ENCODE measurements at regions of chr4 and their contacts with region 1.

Region 1: GRCh38 chr4:38179690-38180377 is 219.6 kb downstream of the PTTG2 start:
- DNase-seq: peak in 1 of 2 experiments; percentile 55
- ATAC-seq: peak; percentile 74 to 89; a peak in 5 of 6 replicates
- H3K4me3 ChIP-seq: no peak overlapping the region
- H3K27ac ChIP-seq: peak overlapping the region in 1 of 2 experiments; percentile 76; a peak in 3 of 6 replicates
- H3K4me1 ChIP-seq: peaks cover 11% of the 10 kb centered on the region; the same call in 2 of the 3 replicates
- CTCF ChIP-seq: peak; percentile 92
- EP300 ChIP-seq: no peak
- POLR2A ChIP-seq: no peak
- RAD21 ChIP-seq: peak; percentile 96 to 97

Region 2: DNA sequence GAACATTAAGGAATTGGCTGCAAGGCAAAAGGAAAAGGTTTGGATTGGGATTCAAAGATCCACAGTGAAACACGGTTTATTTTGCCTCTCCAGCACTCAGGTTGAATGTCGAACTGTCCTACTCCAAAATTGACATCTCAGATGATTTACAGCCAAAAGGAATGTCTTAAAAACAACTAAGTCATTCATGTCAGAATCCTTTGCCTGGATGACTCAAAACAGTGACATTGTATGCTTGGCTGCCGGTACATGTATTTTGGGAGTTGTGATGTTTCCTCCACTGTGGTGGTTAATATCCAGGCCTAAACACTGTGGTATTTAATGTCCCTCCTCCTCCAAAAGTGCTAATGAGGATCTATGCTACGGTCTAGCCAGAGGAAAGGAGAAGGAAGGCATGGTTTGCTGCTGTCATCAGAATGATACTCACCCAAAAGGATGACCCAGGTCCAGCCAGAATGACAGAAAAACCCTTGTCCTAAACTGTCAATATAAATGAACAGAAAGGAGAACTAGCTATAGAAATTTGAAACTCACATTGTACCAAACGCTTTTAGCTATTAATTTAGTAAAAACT is 332.4 kb before region 1 on chr4:
- CTCF ChIA-PET with region 1: no interaction called
- POLR2A ChIA-PET with region 1: no interaction called
- DNase-seq: no peak
- ATAC-seq: no peak
- H3K4me3 ChIP-seq: no peak overlapping the region
- H3K27ac ChIP-seq: no peak overlapping the region
- H3K4me1 ChIP-seq: no peaks in the 10 kb centered on the region
- CTCF ChIP-seq: no peak
- EP300 ChIP-seq: no peak
- POLR2A ChIP-seq: no peak
- RAD21 ChIP-seq: no peak

Region 3: GRCh38 chr4:38069271-38069760 is 110.5 kb before region 1 on chr4:
- CTCF ChIA-PET with region 1: interaction called, 15 read pairs
- POLR2A ChIA-PET with region 1: no interaction called
- DNase-seq: peak; percentile 29 to 71
- ATAC-seq: peak; percentile 70 to 80; a peak in 5 of 6 replicates
- H3K4me3 ChIP-seq: no peak overlapping the region
- H3K27ac ChIP-seq: peak overlapping the region; percentile 33 to 52; a peak in 4 of 6 replicates
- H3K4me1 ChIP-seq: peaks cover 4% of the 10 kb centered on the region; the same call in 1 of the 3 replicates
- CTCF ChIP-seq: peak; percentile 56
- EP300 ChIP-seq: no peak
- POLR2A ChIP-seq: no peak
- RAD21 ChIP-seq: peak; percentile 71 to 72

Region 4: GRCh38 chr4:38169524-38169923 is 10.3 kb before region 1 on chr4:
- CTCF ChIA-PET with region 1: interaction called, 13 read pairs
- POLR2A ChIA-PET with region 1: no interaction called
- DNase-seq: no peak
- ATAC-seq: no peak
- H3K4me3 ChIP-seq: no peak overlapping the region
- H3K27ac ChIP-seq: peak overlapping the region; percentile 30 to 43; a peak in 4 of 6 replicates
- H3K4me1 ChIP-seq: peaks cover 5% of the 10 kb centered on the region; the same call in 1 of the 3 replicates
- CTCF ChIP-seq: no peak
- EP300 ChIP-seq: no peak
- POLR2A ChIP-seq: no peak
- RAD21 ChIP-seq: peak; percentile 17 to 18; a peak in 1 of 5 replicates

Region 5: GRCh38 chr4:38411092-38411491 is 231.3 kb after region 1 on chr4:
- CTCF ChIA-PET with region 1: no interaction called
- POLR2A ChIA-PET with region 1: no interaction called
- DNase-seq: no peak
- ATAC-seq: no peak
- H3K4me3 ChIP-seq: no peak overlapping the region
- H3K27ac ChIP-seq: no peak overlapping the region
- H3K4me1 ChIP-seq: peaks cover 5% of the 10 kb centered on the region; the same call in 1 of the 3 replicates
- CTCF ChIP-seq: no peak
- EP300 ChIP-seq: no peak
- POLR2A ChIP-seq: no peak
- RAD21 ChIP-seq: no peak

Region 6: GRCh38 chr4:38667085-38667893 is 487.5 kb after region 1 on chr4:
- CTCF ChIA-PET with region 1: interaction called, 17 read pairs
- POLR2A ChIA-PET with region 1: no interaction called
- DNase-seq: peak; percentile 89 to 97
- ATAC-seq: peak; percentile 65 to 86
- H3K4me3 ChIP-seq: peak overlapping the region; percentile 98
- H3K27ac ChIP-seq: peak overlapping the region; percentile 99
- H3K4me1 ChIP-seq: peaks cover 53% of the 10 kb centered on the region
- CTCF ChIP-seq: no peak
- EP300 ChIP-seq: peak; percentile 68 to 73; a peak in 3 of 5 replicates
- POLR2A ChIP-seq: no peak
- RAD21 ChIP-seq: no peak

Region 7: DNA sequence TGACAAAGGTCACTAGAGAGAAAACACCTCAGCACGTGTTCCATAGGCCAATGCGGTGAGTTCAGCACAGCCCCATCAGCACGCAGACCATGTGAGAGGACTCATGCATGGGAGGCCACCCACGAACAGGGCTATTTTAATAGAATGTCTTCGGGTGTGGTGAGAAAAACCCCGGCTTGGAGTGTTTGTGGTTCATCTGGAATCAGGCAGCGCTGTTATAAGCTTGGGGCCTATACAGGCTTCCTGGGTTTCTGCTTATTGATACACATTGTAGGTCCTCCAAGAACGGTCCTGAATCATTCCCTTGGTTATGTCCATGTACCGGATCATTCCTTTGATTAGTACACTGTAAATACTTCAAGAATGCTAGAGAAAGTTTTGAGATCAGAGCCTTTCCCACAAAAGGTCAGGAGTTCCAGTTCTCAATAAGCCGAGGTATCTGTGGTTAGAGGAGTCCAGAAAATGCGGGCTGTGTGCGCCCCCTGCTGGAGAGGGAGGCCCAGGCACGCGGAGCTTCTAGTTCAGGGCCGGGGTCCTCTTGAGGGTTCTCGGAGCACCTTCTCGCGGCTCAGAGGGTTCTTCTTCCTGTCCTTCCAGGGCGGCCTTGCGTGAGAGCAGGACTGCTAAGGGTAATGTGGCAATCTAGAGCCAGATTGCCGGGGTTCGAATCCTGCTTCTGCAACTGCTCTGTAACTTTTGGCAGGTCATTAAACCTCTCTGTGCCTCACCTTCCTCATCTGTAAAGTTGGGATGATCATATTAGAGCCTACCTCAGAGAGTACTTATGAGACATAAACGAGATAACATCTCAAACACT is 551.2 kb after region 1 on chr4:
- CTCF ChIA-PET with region 1: interaction called, 102 read pairs
- POLR2A ChIA-PET with region 1: no interaction called
- DNase-seq: peak; percentile 30 to 64
- ATAC-seq: peak; percentile 75 to 93; a peak in 5 of 6 replicates
- H3K4me3 ChIP-seq: no peak overlapping the region
- H3K27ac ChIP-seq: peak overlapping the region in 1 of 2 experiments; percentile 50; a peak in 1 of 6 replicates
- H3K4me1 ChIP-seq: peaks cover 15% of the 10 kb centered on the region
- CTCF ChIP-seq: peak; percentile 75
- EP300 ChIP-seq: no peak
- POLR2A ChIP-seq: no peak
- RAD21 ChIP-seq: peak; percentile 92 to 94

Region 8: DNA sequence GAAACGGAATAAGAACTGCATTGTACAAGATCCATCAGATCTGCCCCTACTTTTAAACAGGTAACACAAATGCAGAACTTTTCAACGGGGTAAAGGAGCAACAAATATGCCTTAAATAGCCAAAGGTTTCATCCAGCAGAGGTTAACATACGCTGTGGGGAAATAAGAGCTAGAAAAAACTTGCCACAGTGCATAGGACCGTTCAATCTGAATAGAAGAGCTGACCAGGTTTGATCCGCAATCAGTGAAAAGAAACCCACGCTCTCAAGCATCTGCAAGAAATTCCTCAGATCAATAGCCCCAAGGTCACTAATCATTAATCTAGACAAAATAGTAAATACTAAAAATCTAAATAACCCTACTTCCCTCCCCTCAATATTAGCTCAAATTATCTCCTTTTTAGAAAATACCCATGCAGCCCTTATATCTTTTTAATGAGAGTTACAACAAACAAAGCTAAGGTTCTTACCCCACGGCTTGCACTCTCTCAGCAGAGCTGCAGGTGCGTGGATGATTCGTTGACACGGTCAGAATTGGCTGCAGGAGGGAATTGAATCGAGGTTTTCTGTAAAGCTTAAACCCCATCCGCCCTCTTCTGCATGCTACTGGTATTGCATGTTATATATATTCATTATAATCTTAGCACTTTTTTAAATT is 602.7 kb after region 1 on chr4 and contains the start of gene TLR10:
- CTCF ChIA-PET with region 1: interaction called, 18 read pairs
- POLR2A ChIA-PET with region 1: no interaction called
- DNase-seq: peak; percentile 19 to 57
- ATAC-seq: peak; percentile 68 to 71; a peak in 4 of 6 replicates
- H3K4me3 ChIP-seq: no peak within 1 kb of the TSS
- H3K27ac ChIP-seq: no peak within 1 kb of the TSS
- H3K4me1 ChIP-seq: peaks cover 9% of the 10 kb centered on the region; the same call in 1 of the 3 replicates
- CTCF ChIP-seq: peak; percentile 53
- EP300 ChIP-seq: no peak
- POLR2A ChIP-seq: no peak
- RAD21 ChIP-seq: peak; percentile 45 to 58
- polyA plus RNA-seq, gene TLR10: 0.11 and 0.14 TPM in 2 replicates